CD4-positive, alpha-beta T cell (primary cell): ENCODE measurements at regions of chr16 and their contacts with region 1.

Region 1: DNA sequence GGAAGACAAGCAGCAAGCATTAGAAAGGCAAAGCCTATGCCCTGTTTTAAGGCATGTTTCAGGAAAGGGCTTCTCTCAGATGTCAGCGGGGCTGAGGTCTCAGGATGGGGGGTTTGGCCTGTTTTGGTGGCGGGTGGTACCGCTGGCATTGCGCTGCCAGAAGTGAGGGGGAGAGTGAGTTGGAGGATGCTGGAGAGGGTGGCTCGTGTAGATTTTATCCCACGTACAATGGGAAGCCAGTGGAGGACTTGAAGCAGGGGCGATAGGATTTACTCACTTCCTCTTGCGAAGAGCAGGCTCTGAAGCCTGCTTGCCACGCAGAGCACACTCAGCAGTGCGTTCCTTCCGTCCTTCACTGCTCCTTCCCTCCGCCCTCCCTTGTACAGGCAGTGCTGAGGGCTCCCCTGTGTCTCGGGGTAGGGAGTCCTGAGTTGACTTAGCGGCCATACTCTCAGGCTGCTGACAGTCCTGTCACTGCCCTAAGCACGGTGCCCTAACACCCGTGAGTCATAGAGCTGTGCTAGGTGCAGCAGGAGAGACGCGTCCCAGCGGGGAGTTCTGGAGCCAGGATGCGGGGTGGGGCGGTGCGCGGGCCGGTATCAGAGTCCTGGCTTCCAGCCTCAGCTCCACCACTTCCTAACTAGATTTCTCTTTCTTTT is 113.1 kb downstream of the SNX29 start:
- DNase-seq: peak in 12 of 14 experiments; percentile 17 to 69 (median 36)
- ATAC-seq: peak; percentile 95
- H3K4me3 ChIP-seq: peak overlapping the region; percentile 45
- H3K4me3 Mint-ChIP-seq: peak overlapping the region; percentile 83
- H3K27ac ChIP-seq: peak overlapping the region; percentile 14 to 54
- H3K27ac Mint-ChIP-seq: peak overlapping the region; percentile 94
- H3K4me1 ChIP-seq: peaks cover 33% of the 10 kb centered on the region
- H3K4me1 Mint-ChIP-seq: peaks cover 59% of the 10 kb centered on the region
- H3K27me3 ChIP-seq: no peaks in the 10 kb centered on the region
- H3K27me3 Mint-ChIP-seq: no peaks in the 10 kb centered on the region
- CTCF ChIP-seq: no peak

Region 2: GRCh38 chr16:10944249-10945064 is 1145.2 kb before region 1 on chr16 and contains the start of gene CLEC16A:
- CTCF ChIA-PET with region 1: no interaction called
- POLR2A ChIA-PET with region 1: no interaction called
- intact Hi-C with region 1: loop called in 1 of 2 experiments (anchors 10 kb)
- DNase-seq: peak; percentile 89 to 98 (median 95)
- ATAC-seq: peak; percentile 76
- H3K4me3 ChIP-seq: peak within 1 kb of the TSS; percentile 85
- H3K4me3 Mint-ChIP-seq: peak within 1 kb of the TSS; percentile 96
- H3K27ac ChIP-seq: peak within 1 kb of the TSS in 1 of 2 donors; percentile 55
- H3K27ac Mint-ChIP-seq: peak within 1 kb of the TSS; percentile 76
- H3K4me1 ChIP-seq: peaks cover 73% of the 10 kb centered on the region
- H3K4me1 Mint-ChIP-seq: peaks cover 73% of the 10 kb centered on the region
- H3K27me3 ChIP-seq: no peaks in the 10 kb centered on the region
- H3K27me3 Mint-ChIP-seq: no peaks in the 10 kb centered on the region
- CTCF ChIP-seq: no peak
- total RNA-seq, gene CLEC16A: 21.7 to 22.7 TPM